ENCODE measurements at regions of chr2 and their contacts with region 1.

Region 1: DNA sequence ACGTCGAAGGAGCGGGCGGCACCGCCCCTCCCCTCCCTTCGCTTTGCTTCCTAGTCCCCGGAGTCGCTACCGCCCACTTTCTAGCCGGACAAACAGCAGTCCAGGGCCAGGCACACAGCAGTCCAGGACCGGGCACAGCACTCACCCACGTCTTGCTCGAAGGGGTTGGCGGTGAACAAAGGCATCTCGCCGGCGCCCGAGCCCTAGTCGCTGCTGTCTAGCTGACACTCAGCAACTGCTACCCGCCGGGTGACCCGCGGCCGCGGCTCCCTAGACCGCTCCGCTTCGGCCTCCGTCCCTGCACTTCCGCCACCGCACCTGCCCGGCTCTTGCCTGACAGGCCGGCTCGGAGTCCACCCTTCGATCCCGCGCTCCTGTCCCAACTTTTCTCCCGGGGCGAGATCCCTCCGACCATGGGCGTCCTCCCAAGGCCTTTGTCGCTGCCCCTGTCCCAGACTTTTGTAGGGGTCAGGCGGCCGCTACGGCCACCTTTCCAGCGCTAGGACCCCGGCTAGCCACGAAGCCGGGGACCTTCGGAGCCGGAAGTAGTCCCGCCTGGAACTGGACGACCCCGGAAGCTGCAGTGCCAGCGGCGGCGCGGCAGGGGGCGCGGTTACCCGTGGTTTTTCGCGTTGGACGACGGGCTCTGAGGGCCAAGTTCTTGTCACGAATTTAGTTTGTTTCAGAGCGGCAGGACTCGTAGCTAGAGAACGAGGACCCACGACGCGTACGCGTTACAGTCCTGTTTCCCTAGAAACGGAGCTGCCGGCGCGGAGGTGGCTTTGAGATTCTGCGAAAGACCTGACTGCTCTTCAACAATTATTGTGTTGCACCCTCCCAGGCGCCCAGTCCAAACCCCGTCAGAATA is at the start of gene STAM2:
- DNase-seq: peak; percentile 81 to 96 (median 92)
- ATAC-seq: peak; percentile 85
- H3K4me3 ChIP-seq: peak within 1 kb of the TSS; percentile 98
- H3K4me3 Mint-ChIP-seq: peak within 1 kb of the TSS; percentile 98
- H3K27ac ChIP-seq: peak within 1 kb of the TSS; percentile 94 to 97
- H3K27ac Mint-ChIP-seq: peak within 1 kb of the TSS; percentile 98
- H3K4me1 ChIP-seq: peaks cover 18% of the 10 kb centered on the region
- H3K4me1 Mint-ChIP-seq: peaks cover 48% of the 10 kb centered on the region
- H3K27me3 ChIP-seq: no peaks in the 10 kb centered on the region
- H3K27me3 Mint-ChIP-seq: no peaks in the 10 kb centered on the region
- CTCF ChIP-seq: peak; percentile 96
- total RNA-seq, gene STAM2: 4.1 to 4.9 TPM

Region 2: DNA sequence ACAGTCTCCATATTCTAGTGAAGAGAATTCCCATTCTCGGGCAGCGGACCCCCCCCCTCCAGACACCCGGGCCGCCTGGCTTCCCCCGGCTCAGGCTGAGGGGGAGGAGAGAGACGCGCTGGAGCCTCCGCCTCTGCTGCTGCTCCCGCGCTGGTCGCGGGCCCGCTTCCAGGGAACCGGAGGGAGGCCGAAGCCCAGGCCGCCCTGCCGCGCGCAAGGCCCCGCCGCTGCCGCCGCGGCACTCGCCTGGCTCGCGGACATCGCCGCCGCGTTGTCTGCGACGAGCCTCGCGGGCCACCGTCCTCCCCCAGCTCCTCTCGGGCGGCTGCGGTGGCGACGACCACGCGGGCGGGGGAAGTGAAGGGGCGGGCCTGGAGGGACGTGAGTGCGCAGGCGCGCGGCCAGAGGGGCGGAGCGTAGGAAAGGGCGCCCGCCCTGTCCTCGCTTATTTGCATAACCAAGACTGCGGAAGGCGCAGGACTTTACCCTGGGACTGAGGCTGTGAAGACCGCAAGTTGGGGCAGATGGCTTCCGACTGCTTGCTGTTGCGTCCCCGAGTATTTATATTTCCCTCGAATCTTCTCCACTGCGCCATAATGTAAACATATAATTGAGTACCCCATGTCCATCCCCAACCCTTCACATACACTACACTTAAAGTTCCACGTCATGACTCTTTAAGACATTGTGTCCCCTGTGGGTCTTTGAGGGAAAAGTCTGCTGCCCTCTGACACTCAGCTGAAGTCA is 347.4 kb before region 1 on chr2 and contains the start of gene ARL5A:
- CTCF ChIA-PET with region 1: no interaction called
- POLR2A ChIA-PET with region 1: interaction called, 3 read pairs
- intact Hi-C with region 1: loop called in 1 of 2 experiments (anchors 10 kb)
- DNase-seq: peak; percentile 89 to 98 (median 95)
- ATAC-seq: peak; percentile 94
- H3K4me3 ChIP-seq: peak within 1 kb of the TSS; percentile 91
- H3K4me3 Mint-ChIP-seq: peak within 1 kb of the TSS; percentile 93
- H3K27ac ChIP-seq: peak within 1 kb of the TSS; percentile 51 to 52
- H3K27ac Mint-ChIP-seq: peak within 1 kb of the TSS; percentile 95
- H3K4me1 ChIP-seq: peaks cover 18% of the 10 kb centered on the region
- H3K4me1 Mint-ChIP-seq: peaks cover 50% of the 10 kb centered on the region
- H3K27me3 ChIP-seq: no peaks in the 10 kb centered on the region
- H3K27me3 Mint-ChIP-seq: no peaks in the 10 kb centered on the region
- CTCF ChIP-seq: no peak
- total RNA-seq, gene ARL5A: 16.9 to 20.5 TPM

Region 3: DNA sequence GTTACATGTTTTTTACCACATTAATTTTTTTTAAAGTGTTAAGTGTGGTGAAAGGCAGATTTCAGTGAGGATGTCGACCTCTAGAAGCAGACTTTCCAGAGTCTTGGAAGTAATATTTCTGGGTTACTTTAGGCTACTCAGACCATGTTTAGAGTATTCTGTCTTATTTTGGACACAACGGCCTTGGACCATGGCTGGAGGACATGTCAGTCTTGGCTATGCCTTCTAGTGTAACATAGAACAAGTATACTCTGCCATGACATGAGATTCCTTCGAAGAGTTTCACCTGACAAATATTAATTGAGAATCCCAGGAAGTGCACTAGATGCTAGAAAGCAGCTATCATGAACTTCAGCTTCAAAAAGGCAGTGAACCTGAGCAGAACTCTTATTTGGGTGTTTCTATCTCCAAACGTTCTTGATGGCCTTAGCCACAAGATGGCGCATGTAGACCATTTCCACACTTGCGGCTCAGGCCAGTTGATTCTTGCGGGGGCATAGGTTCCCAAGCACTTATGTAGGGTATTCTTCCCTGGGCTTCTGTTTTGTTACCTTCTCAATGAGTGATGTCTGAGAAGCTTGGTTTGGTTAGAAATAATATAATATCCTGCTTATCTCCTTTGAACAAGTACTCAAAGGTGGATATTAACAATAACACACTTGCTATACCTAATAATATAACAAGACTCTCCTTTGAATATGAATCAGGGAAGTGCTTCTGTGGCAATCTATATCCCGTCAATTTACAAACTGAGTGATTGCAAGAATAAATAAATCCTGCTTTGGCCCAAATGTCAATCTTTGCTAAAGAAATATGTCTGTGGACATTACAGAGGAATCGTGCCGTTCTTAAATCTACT is 138.9 kb before region 1 on chr2:
- CTCF ChIA-PET with region 1: no interaction called
- POLR2A ChIA-PET with region 1: no interaction called
- intact Hi-C with region 1: loop called in 1 of 2 experiments (anchors 2 kb)
- DNase-seq: peak; percentile 12 to 72 (median 34)
- ATAC-seq: no peak
- H3K4me3 ChIP-seq: no peak overlapping the region
- H3K4me3 Mint-ChIP-seq: no peak overlapping the region
- H3K27ac ChIP-seq: no peak overlapping the region
- H3K27ac Mint-ChIP-seq: no peak overlapping the region
- H3K4me1 ChIP-seq: no peaks in the 10 kb centered on the region
- H3K4me1 Mint-ChIP-seq: no peaks in the 10 kb centered on the region
- H3K27me3 ChIP-seq: no peaks in the 10 kb centered on the region
- H3K27me3 Mint-ChIP-seq: no peaks in the 10 kb centered on the region
- CTCF ChIP-seq: peak; percentile 71

Region 4: DNA sequence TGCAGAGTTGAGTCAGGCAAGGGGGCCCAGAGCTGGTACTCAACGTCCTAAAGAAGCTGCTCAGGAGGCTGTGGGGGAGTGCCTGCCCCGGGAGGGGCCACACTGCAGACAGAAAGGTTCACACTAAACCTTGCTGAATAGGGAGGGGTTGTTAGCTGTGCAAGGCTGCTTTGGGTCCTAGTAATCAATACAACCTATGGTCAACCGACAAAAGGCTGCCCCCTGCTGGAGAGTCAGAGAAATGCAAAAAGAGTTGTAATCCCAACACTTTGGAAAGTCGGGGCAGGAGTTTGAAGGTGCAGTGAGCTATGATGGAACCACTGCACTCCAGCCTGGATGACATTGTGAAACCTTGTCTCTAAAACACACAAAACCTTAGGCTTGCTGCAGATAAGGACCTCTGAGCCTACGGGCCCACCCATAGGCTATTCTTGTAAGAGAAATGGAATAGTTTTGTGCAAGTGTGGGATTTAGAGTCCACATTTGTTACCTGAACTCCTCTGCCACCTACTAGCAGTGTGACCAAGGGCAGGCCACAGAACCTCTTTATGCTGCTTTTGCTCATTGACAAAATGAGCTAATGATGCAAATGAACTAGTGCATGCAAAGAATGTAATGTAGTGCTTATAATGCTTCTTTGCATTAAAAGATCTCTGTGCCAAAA is 460.1 kb after region 1 on chr2:
- CTCF ChIA-PET with region 1: interaction called, 18 read pairs
- POLR2A ChIA-PET with region 1: interaction called, 16 read pairs
- intact Hi-C with region 1: loop called (anchors 1 kb)
- DNase-seq: peak; percentile 36 to 79 (median 54)
- ATAC-seq: peak; percentile 52
- H3K4me3 ChIP-seq: no peak overlapping the region
- H3K4me3 Mint-ChIP-seq: no peak overlapping the region
- H3K27ac ChIP-seq: no peak overlapping the region
- H3K27ac Mint-ChIP-seq: no peak overlapping the region
- H3K4me1 ChIP-seq: peaks cover 4% of the 10 kb centered on the region
- H3K4me1 Mint-ChIP-seq: no peaks in the 10 kb centered on the region
- H3K27me3 ChIP-seq: no peaks in the 10 kb centered on the region
- H3K27me3 Mint-ChIP-seq: peaks cover 4% of the 10 kb centered on the region
- CTCF ChIP-seq: peak; percentile 91

Region 5: GRCh38 chr2:153519257-153519875 is 1343.7 kb after region 1 on chr2:
- CTCF ChIA-PET with region 1: no interaction called
- POLR2A ChIA-PET with region 1: no interaction called
- intact Hi-C with region 1: loop called (anchors 5 kb)
- DNase-seq: peak in 12 of 14 experiments; percentile 7 to 62 (median 26)
- ATAC-seq: no peak
- H3K4me3 ChIP-seq: no peak overlapping the region
- H3K4me3 Mint-ChIP-seq: no peak overlapping the region
- H3K27ac ChIP-seq: no peak overlapping the region
- H3K27ac Mint-ChIP-seq: no peak overlapping the region
- H3K4me1 ChIP-seq: no peaks in the 10 kb centered on the region
- H3K4me1 Mint-ChIP-seq: no peaks in the 10 kb centered on the region
- H3K27me3 ChIP-seq: no peaks in the 10 kb centered on the region
- H3K27me3 Mint-ChIP-seq: peaks cover 5% of the 10 kb centered on the region
- CTCF ChIP-seq: peak; percentile 83

Region 6: DNA sequence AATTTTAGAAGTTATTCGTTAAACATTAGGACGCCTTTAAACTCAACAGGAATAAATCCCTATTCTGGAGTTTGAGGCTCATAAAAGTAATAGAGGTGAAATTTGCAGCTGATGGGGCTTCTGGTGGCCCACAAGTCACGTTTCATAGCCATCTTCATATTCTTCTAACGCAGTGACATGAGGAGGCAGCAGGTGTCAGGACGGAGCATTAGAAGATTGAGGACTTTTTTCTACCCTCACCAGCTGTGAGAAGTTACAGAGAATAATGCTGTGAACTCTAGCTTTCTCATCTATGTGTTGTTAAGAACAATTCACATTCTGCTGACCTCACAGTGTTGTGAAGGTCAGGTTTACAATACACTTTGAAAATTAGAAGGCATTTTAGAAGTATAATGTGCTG is 1542.8 kb after region 1 on chr2:
- CTCF ChIA-PET with region 1: no interaction called
- POLR2A ChIA-PET with region 1: no interaction called
- intact Hi-C with region 1: no loop called
- DNase-seq: no peak
- ATAC-seq: no peak
- H3K4me3 ChIP-seq: no peak overlapping the region
- H3K4me3 Mint-ChIP-seq: no peak overlapping the region
- H3K27ac ChIP-seq: no peak overlapping the region
- H3K27ac Mint-ChIP-seq: no peak overlapping the region
- H3K4me1 ChIP-seq: no peaks in the 10 kb centered on the region
- H3K4me1 Mint-ChIP-seq: no peaks in the 10 kb centered on the region
- H3K27me3 ChIP-seq: no peaks in the 10 kb centered on the region
- H3K27me3 Mint-ChIP-seq: no peaks in the 10 kb centered on the region
- CTCF ChIP-seq: no peak

Measured in CD4-positive, alpha-beta T cell (primary cell).